K562 (cell line): ENCODE measurements at regions of chr2 and their contacts with region 1.

Region 1: GRCh38 chr2:176251928-176252327 is 17.3 kb upstream of the MTX2 start:
- DNase-seq: no peak
- ATAC-seq: no peak
- H3K4me3 ChIP-seq: no peak overlapping the region
- H3K27ac ChIP-seq: no peak overlapping the region
- H3K4me1 ChIP-seq: no peaks in the 10 kb centered on the region
- H3K27me3 ChIP-seq: peaks cover 2 to 12% of the 10 kb centered on the region in 2 experiments; a peak in 3 of 5 replicates
- CTCF ChIP-seq: no peak
- EP300 ChIP-seq: no peak
- POLR2A ChIP-seq: no peak
- RAD21 ChIP-seq: no peak

Region 2: GRCh38 chr2:176269319-176270099 is 17.6 kb after region 1 on chr2 and contains the start of gene MTX2:
- CTCF ChIA-PET with region 1: no interaction called
- POLR2A ChIA-PET with region 1: interaction called, 10 read pairs
- in situ Hi-C with region 1: no loop called
- intact Hi-C with region 1: no loop called
- DNase-seq: peak; percentile 81 to 93 (median 86)
- ATAC-seq: peak; percentile 98
- H3K4me3 ChIP-seq: peak within 1 kb of the TSS; percentile 88
- H3K27ac ChIP-seq: peak within 1 kb of the TSS; percentile 93
- H3K4me1 ChIP-seq: peaks cover 4 to 6% of the 10 kb centered on the region in 2 experiments; a peak in 3 of 5 replicates
- H3K27me3 ChIP-seq: no peaks in the 10 kb centered on the region
- CTCF ChIP-seq: 0 out of 6 replicates have a peak, but pooled peaks of 1 of the 3 experiments have one; percentile 19
- EP300 ChIP-seq: no peak
- POLR2A ChIP-seq: peak; percentile 98
- RAD21 ChIP-seq: 0 out of 4 replicates have a peak, but pooled peaks of 1 of the 2 experiments have one; percentile 11
- polyA plus RNA-seq, gene MTX2: 38.1 to 60.3 TPM

Region 3: GRCh38 chr2:176338395-176338794 is 86.5 kb after region 1 on chr2:
- CTCF ChIA-PET with region 1: no interaction called
- POLR2A ChIA-PET with region 1: no interaction called
- in situ Hi-C with region 1: loop called (anchors 5 kb)
- intact Hi-C with region 1: no loop called
- DNase-seq: no peak
- ATAC-seq: no peak
- H3K4me3 ChIP-seq: no peak overlapping the region
- H3K27ac ChIP-seq: no peak overlapping the region
- H3K4me1 ChIP-seq: no peaks in the 10 kb centered on the region
- H3K27me3 ChIP-seq: no peaks in the 10 kb centered on the region
- CTCF ChIP-seq: no peak
- EP300 ChIP-seq: no peak
- POLR2A ChIP-seq: no peak
- RAD21 ChIP-seq: no peak